IMR-90 (cell line): ENCODE measurements at regions of chr20 and their contacts with region 1.

Region 1: DNA sequence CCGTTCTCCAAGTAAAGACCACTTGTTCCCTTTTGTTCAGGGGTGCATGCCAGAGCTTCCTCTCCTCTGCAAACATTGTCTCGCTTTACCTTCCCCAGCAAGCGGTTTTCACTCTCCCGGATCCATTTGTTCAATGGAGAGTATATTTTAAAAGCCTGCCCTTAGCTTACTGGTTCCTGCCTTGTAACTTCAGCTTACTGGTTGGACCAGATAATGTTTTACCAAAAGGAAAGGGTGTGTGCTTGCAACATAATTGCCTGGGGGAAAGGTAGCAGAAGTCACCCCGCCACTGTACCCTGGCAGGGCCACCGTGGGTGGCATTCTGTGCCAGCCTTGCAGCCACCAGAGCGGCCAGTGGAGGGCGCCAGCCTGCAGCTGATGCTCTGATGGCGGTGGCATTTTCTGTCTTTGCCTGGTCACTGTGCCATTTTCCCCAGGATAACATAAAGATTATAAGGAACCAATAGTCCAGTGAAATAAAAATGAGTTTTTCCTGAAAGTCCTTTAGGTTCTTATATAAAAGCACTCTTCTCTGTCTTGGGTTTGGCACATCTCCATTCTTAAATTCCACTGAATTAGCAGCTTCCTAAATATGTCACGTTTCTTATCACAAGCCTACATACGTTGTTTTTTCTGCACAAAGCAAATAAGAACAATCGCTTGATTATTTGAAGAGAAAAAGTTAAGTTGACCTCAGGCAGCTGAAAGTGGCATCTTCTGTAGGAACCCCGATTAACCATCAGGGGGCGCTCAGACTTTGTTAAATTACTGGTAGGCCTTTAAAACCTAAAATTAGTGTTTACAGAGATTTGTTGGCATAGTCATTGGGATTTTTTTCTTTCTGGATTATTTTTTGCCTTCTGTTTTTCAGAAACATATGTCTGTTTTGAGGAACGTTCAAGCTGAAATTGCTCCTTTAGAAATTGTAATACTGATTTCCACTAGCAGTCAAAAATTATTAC is 67.4 kb upstream of the XRN2 start:
- DNase-seq: peak; percentile 66
- ATAC-seq: peak; percentile 93
- H3K4me3 ChIP-seq: no peak overlapping the region
- H3K27ac ChIP-seq: no peak overlapping the region
- H3K4me1 ChIP-seq: no peaks in the 10 kb centered on the region
- H3K27me3 ChIP-seq: no peaks in the 10 kb centered on the region
- CTCF ChIP-seq: peak; percentile 89
- POLR2A ChIP-seq: no peak
- RAD21 ChIP-seq: peak; percentile 84

Region 2: GRCh38 chr20:20860078-20860806 is 375.5 kb before region 1 on chr20:
- CTCF ChIA-PET with region 1: interaction called, 15 read pairs
- POLR2A ChIA-PET with region 1: no interaction called
- dilution Hi-C with region 1: no loop called
- in situ Hi-C with region 1: loop called (anchors 25 kb)
- intact Hi-C with region 1: loop called (anchors 2 kb)
- DNase-seq: peak; percentile 74
- ATAC-seq: peak; percentile 96
- H3K4me3 ChIP-seq: no peak overlapping the region
- H3K27ac ChIP-seq: no peak overlapping the region
- H3K4me1 ChIP-seq: no peaks in the 10 kb centered on the region
- H3K27me3 ChIP-seq: no peaks in the 10 kb centered on the region
- CTCF ChIP-seq: peak; percentile 89
- POLR2A ChIP-seq: no peak
- RAD21 ChIP-seq: peak; percentile 73

Region 3: DNA sequence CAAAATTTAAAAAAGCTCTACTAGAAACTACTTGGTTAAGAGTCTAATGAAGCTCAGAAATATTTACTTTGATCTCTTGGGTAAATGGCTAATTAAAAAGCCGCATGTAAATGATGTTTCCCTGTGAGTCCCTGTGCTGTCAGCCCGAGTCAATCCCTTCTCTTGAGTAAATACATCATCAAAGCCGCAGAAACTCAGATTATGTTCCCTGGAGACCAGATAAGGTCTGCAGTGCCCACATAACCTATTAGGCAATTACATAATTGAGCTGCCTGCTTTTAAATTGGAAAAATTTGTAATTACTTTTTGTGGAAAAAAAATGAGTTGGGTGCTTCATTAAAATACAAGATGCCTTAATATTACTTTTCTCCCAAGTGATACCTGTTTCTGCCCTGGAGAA is 26.8 kb before region 1 on chr20:
- CTCF ChIA-PET with region 1: no interaction called
- POLR2A ChIA-PET with region 1: no interaction called
- dilution Hi-C with region 1: no loop called
- in situ Hi-C with region 1: no loop called
- intact Hi-C with region 1: no loop called
- DNase-seq: no peak
- ATAC-seq: no peak
- H3K4me3 ChIP-seq: no peak overlapping the region
- H3K27ac ChIP-seq: no peak overlapping the region
- H3K4me1 ChIP-seq: no peaks in the 10 kb centered on the region
- H3K27me3 ChIP-seq: no peaks in the 10 kb centered on the region
- CTCF ChIP-seq: no peak
- POLR2A ChIP-seq: no peak
- RAD21 ChIP-seq: no peak

Region 4: GRCh38 chr20:21303061-21303871 is 67.5 kb after region 1 on chr20 and contains the start of gene XRN2:
- CTCF ChIA-PET with region 1: interaction called, 3 read pairs
- POLR2A ChIA-PET with region 1: interaction called, 3 read pairs
- dilution Hi-C with region 1: no loop called
- in situ Hi-C with region 1: no loop called
- intact Hi-C with region 1: loop called (anchors 5 kb)
- DNase-seq: peak; percentile 93
- ATAC-seq: peak; percentile 91
- H3K4me3 ChIP-seq: peak within 1 kb of the TSS; percentile 81
- H3K27ac ChIP-seq: peak within 1 kb of the TSS; percentile 93
- H3K4me1 ChIP-seq: peaks cover 3% of the 10 kb centered on the region
- H3K27me3 ChIP-seq: no peaks in the 10 kb centered on the region
- CTCF ChIP-seq: 0 out of 2 replicates have a peak, but pooled peaks have one; percentile 21
- POLR2A ChIP-seq: peak; percentile 85
- RAD21 ChIP-seq: no peak
- total RNA-seq, gene XRN2: 70.8 and 99.2 TPM in 2 replicates

Region 5: GRCh38 chr20:21361266-21361665 is 125.5 kb after region 1 on chr20:
- CTCF ChIA-PET with region 1: no interaction called
- POLR2A ChIA-PET with region 1: no interaction called
- dilution Hi-C with region 1: no loop called
- in situ Hi-C with region 1: no loop called
- intact Hi-C with region 1: loop called (anchors 5 kb)
- DNase-seq: peak; percentile 80
- ATAC-seq: peak; percentile 88
- H3K4me3 ChIP-seq: no peak overlapping the region
- H3K27ac ChIP-seq: no peak overlapping the region
- H3K4me1 ChIP-seq: peaks cover 3% of the 10 kb centered on the region
- H3K27me3 ChIP-seq: no peaks in the 10 kb centered on the region
- CTCF ChIP-seq: no peak
- POLR2A ChIP-seq: no peak
- RAD21 ChIP-seq: no peak

Region 6: GRCh38 chr20:21490095-21490494 is 254.3 kb after region 1 on chr20:
- CTCF ChIA-PET with region 1: interaction called, 6 read pairs
- POLR2A ChIA-PET with region 1: no interaction called
- dilution Hi-C with region 1: no loop called
- in situ Hi-C with region 1: no loop called
- intact Hi-C with region 1: loop called (anchors 1 kb)
- DNase-seq: peak; percentile 23
- ATAC-seq: no peak; the same call in 1 of the 2 replicates
- H3K4me3 ChIP-seq: no peak overlapping the region
- H3K27ac ChIP-seq: no peak overlapping the region
- H3K4me1 ChIP-seq: no peaks in the 10 kb centered on the region
- H3K27me3 ChIP-seq: peaks cover 12% of the 10 kb centered on the region; the same call in 1 of the 2 replicates
- CTCF ChIP-seq: peak; percentile 50
- POLR2A ChIP-seq: no peak
- RAD21 ChIP-seq: peak; percentile 40; the same call in 1 of the 2 replicates

Region 7: DNA sequence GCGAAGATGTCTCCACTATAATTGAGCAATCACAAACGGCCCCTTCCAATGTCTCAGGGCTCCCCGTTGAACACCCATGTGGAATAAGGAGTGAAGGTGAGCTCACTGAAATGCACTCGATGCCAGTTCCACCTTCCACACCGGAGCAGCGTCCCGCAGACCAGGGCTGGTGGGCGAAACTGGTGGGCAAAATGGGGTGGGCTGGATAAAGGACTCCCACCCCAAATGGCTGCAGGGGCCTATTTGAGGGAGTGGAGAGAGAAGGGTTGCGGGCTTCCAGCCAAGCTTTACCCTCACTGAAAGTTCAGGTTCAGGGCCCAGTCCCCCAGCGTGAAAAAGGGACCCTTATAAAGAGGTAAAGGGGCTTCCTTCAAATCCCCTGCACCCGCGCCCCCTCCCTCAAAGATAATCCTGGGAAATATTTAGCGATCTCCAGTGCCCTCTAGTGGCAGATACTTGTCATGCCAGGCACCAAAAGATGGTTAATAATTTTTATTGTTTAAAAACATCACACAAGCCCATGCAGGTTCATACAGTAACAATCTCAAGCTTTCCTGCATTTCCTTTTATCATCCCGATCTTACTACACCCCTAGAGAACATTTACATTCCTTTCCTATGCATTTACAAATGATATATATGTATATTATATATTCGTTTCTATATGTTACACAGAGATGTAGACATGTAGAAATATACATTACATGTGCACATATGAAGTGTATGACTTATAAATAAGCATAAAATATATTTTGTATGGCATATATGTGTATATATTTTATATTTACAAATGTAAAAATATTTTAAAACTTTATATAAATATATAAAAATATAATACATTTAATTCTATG is 336.3 kb after region 1 on chr20:
- CTCF ChIA-PET with region 1: no interaction called
- POLR2A ChIA-PET with region 1: no interaction called
- dilution Hi-C with region 1: no loop called
- in situ Hi-C with region 1: no loop called
- intact Hi-C with region 1: loop called (anchors 5 kb)
- DNase-seq: no peak
- ATAC-seq: peak; percentile 61
- H3K4me3 ChIP-seq: no peak overlapping the region
- H3K27ac ChIP-seq: no peak overlapping the region
- H3K4me1 ChIP-seq: no peaks in the 10 kb centered on the region
- H3K27me3 ChIP-seq: no peaks in the 10 kb centered on the region
- CTCF ChIP-seq: peak; percentile 80
- POLR2A ChIP-seq: no peak
- RAD21 ChIP-seq: peak; percentile 57